Caco-2 (cell line): ENCODE measurements at regions of chr20 and their contacts with region 1.

Region 1: DNA sequence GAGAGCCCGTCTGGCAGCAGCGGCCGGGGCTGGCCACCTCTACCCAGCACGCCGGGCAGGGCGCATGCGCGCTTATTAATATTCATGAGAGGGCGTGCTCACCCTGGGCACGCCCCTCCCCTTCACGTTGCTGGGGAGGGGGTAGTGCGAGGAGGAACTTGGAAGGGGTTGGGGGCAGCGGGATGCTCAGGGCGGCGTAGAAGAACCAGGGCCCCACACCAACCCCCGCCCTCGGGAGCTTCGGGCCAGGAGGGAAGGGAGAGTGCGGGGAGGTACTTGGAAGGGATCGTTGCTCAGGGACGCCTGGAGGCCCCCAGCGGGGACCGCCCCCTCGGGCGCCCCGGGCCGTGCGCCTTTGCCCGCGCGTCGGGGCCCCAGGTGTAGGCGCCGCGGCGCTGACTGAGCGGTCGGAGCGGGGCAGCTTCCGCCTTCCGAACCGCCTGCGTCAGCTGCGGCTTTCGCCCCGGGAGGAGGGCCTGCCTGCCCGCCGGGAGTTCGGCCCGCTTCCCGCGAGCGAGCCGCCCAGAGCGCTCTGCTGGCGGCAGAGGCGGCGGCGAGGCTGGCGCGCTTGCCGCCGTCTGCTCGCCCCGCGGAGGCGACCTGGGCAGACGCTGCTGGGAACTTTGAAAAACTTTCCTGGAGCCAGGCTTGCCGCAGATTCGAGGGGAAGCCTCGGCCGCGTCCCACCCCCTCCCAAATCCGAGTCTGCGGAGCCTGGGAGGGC is at the start of gene JAG1:
- DNase-seq: peak; percentile 98 to 99
- H3K4me3 ChIP-seq: peak within 1 kb of the TSS; percentile 97
- H3K4me3 Mint-ChIP-seq: peak within 1 kb of the TSS; percentile 100
- H3K27ac Mint-ChIP-seq: peak within 1 kb of the TSS; percentile 98
- H3K4me1 ChIP-seq: peaks cover under 1% of the 10 kb centered on the region; the same call in 1 of the 2 replicates
- H3K4me1 Mint-ChIP-seq: peaks cover 14% of the 10 kb centered on the region
- H3K27me3 ChIP-seq: no peaks in the 10 kb centered on the region
- H3K27me3 Mint-ChIP-seq: peaks cover 2% of the 10 kb centered on the region
- CTCF ChIP-seq: no peak
- total RNA-seq, gene JAG1: 69.1 and 69.8 TPM in 2 replicates

Region 2: GRCh38 chr20:10553326-10553984 is 120.7 kb before region 1 on chr20:
- CTCF ChIA-PET with region 1: interaction called, 3 read pairs
- POLR2A ChIA-PET with region 1: no interaction called
- intact Hi-C with region 1: loop called (anchors 1 kb)
- DNase-seq: peak; percentile 74 to 76
- H3K4me3 ChIP-seq: no peak overlapping the region
- H3K4me3 Mint-ChIP-seq: no peak overlapping the region
- H3K27ac Mint-ChIP-seq: no peak overlapping the region
- H3K4me1 ChIP-seq: peaks cover 31% of the 10 kb centered on the region
- H3K4me1 Mint-ChIP-seq: peaks cover 50% of the 10 kb centered on the region
- H3K27me3 ChIP-seq: no peaks in the 10 kb centered on the region
- H3K27me3 Mint-ChIP-seq: no peaks in the 10 kb centered on the region
- CTCF ChIP-seq: peak; percentile 76 to 85

Region 3: DNA sequence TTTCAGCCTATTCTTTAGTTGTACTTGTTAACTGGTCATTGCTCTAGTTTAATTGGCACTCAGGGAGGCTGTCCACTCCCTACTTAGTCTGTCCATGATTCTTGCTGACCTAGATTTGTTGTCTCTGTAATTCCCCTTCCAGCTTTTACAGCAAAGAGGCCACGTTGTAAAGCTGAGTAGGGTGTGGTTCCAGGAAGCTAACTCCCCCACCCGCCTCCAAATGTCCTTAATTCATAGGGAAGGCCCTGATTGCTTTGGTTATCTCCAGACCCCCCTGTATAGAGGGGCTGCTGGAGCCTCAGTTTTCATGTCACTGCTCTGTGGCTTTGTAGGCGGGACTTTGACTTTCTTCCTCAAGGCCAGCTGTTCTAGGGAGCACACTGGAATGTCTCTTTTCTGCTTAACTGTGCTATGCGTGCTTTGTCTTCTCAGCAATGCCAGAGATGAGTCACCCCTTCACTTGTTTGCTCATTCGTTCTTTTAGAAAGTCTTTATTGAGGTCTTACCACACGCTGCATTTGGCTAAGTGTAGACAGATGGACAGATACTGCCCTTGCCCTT is 174.7 kb after region 1 on chr20:
- CTCF ChIA-PET with region 1: no interaction called
- POLR2A ChIA-PET with region 1: no interaction called
- intact Hi-C with region 1: loop called (anchors 2 kb)
- DNase-seq: peak; percentile 69 to 79
- H3K4me3 ChIP-seq: no peak overlapping the region
- H3K4me3 Mint-ChIP-seq: peak overlapping the region; percentile 9
- H3K27ac Mint-ChIP-seq: peak overlapping the region; percentile 66
- H3K4me1 ChIP-seq: peaks cover 20% of the 10 kb centered on the region
- H3K4me1 Mint-ChIP-seq: peaks cover 39% of the 10 kb centered on the region
- H3K27me3 ChIP-seq: no peaks in the 10 kb centered on the region
- H3K27me3 Mint-ChIP-seq: no peaks in the 10 kb centered on the region
- CTCF ChIP-seq: no peak

Region 4: DNA sequence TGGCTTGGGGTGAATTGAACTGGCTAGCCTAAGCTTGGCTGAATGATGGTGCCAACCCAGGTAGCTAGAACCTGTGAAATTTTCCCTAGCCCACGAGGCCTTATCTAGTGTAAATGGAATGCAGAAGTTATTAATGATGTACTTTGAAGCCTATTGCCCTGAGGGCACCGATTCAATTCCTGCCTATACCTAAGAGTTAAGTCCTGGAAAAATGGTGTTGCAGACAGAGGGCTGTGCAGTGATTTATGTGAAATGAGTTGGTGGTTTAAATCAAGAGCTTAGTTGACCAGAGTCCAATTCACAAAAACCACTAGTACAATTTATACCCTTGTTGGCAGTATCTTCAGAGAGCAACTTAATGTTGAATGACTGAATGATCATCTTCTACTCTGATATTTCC is 373.4 kb after region 1 on chr20:
- CTCF ChIA-PET with region 1: interaction called, 3 read pairs
- POLR2A ChIA-PET with region 1: interaction called, 9 read pairs
- intact Hi-C with region 1: loop called (anchors 2 kb)
- DNase-seq: peak; percentile 41 to 74
- H3K4me3 ChIP-seq: no peak overlapping the region
- H3K4me3 Mint-ChIP-seq: no peak overlapping the region
- H3K27ac Mint-ChIP-seq: no peak overlapping the region
- H3K4me1 ChIP-seq: peaks cover 50% of the 10 kb centered on the region
- H3K4me1 Mint-ChIP-seq: peaks cover 23% of the 10 kb centered on the region
- H3K27me3 ChIP-seq: no peaks in the 10 kb centered on the region
- H3K27me3 Mint-ChIP-seq: no peaks in the 10 kb centered on the region
- CTCF ChIP-seq: no peak

Region 5: GRCh38 chr20:11274141-11274594 is 600.0 kb after region 1 on chr20:
- CTCF ChIA-PET with region 1: no interaction called
- POLR2A ChIA-PET with region 1: no interaction called
- intact Hi-C with region 1: loop called (anchors 1 kb)
- DNase-seq: peak; percentile 61 to 63
- H3K4me3 ChIP-seq: no peak overlapping the region
- H3K4me3 Mint-ChIP-seq: no peak overlapping the region
- H3K27ac Mint-ChIP-seq: no peak overlapping the region
- H3K4me1 ChIP-seq: peaks cover 21% of the 10 kb centered on the region
- H3K4me1 Mint-ChIP-seq: peaks cover 18% of the 10 kb centered on the region
- H3K27me3 ChIP-seq: no peaks in the 10 kb centered on the region
- H3K27me3 Mint-ChIP-seq: no peaks in the 10 kb centered on the region
- CTCF ChIP-seq: peak; percentile 73 to 77

Region 6: DNA sequence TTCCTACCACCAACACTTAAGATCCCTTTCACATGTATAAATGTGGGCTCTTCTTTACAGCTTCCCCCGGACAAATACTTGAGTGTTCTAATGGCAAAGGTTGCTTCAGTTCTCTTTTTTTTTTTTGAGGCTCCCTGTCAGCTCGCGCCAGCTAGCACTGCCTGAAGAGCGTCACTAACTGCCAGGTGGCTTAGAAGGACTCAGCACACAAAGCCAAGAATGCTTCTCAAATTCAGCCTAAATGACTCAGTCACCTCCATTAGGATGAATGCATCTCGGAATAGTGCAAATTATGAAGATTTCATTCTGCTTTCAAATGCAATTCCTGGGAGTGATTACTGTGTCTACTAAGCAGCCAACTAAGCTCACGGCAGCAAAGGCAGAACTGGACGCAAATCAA is 1092.8 kb after region 1 on chr20:
- CTCF ChIA-PET with region 1: no interaction called
- POLR2A ChIA-PET with region 1: no interaction called
- intact Hi-C with region 1: no loop called
- DNase-seq: no peak
- H3K4me3 ChIP-seq: no peak overlapping the region
- H3K4me3 Mint-ChIP-seq: no peak overlapping the region
- H3K27ac Mint-ChIP-seq: no peak overlapping the region
- H3K4me1 ChIP-seq: 0 out of 2 replicates have a peak, but pooled peaks cover 9% of the 10 kb centered on the region
- H3K4me1 Mint-ChIP-seq: peaks cover 7% of the 10 kb centered on the region
- H3K27me3 ChIP-seq: no peaks in the 10 kb centered on the region
- H3K27me3 Mint-ChIP-seq: peaks cover 2% of the 10 kb centered on the region
- CTCF ChIP-seq: no peak